WTC11 (cell line): ENCODE measurements at regions of chr4 and their contacts with region 1.

Region 1: DNA sequence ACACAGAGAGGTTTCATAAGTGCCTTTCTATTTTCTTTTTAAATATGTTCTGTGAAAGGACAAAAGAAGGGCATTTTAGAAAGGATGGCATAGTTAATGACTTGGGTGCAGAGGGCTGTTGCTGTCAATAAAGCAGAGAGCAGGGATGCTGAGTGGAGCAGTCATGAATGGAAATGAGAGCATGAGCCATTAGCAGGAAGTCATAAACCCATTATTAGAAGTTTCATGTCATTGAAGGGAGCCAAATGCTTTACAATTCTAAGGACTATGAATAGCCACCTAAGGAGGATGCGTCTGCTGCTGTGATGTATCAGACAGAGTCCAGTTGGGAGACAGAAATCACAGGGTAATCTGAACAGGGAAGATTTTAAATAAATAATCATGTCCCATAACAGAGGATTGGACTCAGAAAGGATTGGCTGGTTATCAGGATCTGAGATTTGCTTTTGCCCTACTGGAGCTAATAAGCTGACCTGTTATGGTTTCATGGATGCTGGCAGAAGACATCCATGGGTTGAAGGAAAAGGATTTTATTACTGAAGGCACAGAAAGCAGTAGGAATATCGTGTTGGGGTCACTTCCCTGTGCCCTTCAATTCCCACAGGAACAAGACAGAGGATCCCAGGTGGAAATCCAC is 47.5 kb upstream of the WDR19 start:
- DNase-seq: no peak
- ATAC-seq: no peak
- H3K4me3 Mint-ChIP-seq: no peak overlapping the region
- H3K27ac Mint-ChIP-seq: no peak overlapping the region
- H3K4me1 Mint-ChIP-seq: peaks cover 6% of the 10 kb centered on the region; the same call in 1 of the 2 replicates
- H3K27me3 Mint-ChIP-seq: no peaks in the 10 kb centered on the region
- CTCF ChIP-seq: no peak

Region 2: GRCh38 chr4:38889143-38889542 is 245.7 kb before region 1 on chr4:
- CTCF ChIA-PET with region 1: interaction called, 10 read pairs
- POLR2A ChIA-PET with region 1: no interaction called
- DNase-seq: no peak
- ATAC-seq: no peak
- H3K4me3 Mint-ChIP-seq: no peak overlapping the region
- H3K27ac Mint-ChIP-seq: no peak overlapping the region
- H3K4me1 Mint-ChIP-seq: peaks cover 45% of the 10 kb centered on the region
- H3K27me3 Mint-ChIP-seq: no peaks in the 10 kb centered on the region
- CTCF ChIP-seq: no peak

Region 3: GRCh38 chr4:38902695-38903094 is 232.1 kb before region 1 on chr4:
- CTCF ChIA-PET with region 1: interaction called, 33 read pairs
- POLR2A ChIA-PET with region 1: no interaction called
- DNase-seq: no peak
- ATAC-seq: 0 out of 2 replicates have a peak, but pooled peaks have one; percentile 36
- H3K4me3 Mint-ChIP-seq: no peak overlapping the region
- H3K27ac Mint-ChIP-seq: no peak overlapping the region
- H3K4me1 Mint-ChIP-seq: peaks cover 6% of the 10 kb centered on the region
- H3K27me3 Mint-ChIP-seq: no peaks in the 10 kb centered on the region
- CTCF ChIP-seq: no peak

Region 4: DNA sequence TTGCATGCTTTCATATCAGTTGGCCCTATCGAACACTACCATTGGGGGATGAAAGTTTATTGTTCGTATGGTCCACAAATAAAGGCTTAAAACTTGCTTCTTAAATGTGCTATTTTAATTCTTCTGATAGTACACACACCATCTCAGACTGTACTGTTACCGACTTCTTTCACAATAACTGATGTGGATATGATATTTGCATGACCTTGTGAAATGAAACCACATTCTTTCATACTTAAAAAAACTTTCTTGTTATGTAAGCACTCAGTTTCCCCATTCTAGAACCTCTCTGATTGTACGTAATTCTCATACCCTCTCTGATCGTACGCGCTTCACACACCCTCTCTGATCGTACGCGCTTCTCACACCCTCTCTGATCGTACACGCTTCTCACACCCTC is 35.5 kb after region 1 on chr4:
- CTCF ChIA-PET with region 1: no interaction called
- POLR2A ChIA-PET with region 1: no interaction called
- DNase-seq: no peak
- ATAC-seq: no peak
- H3K4me3 Mint-ChIP-seq: no peak overlapping the region
- H3K27ac Mint-ChIP-seq: no peak overlapping the region
- H3K4me1 Mint-ChIP-seq: peaks cover 13% of the 10 kb centered on the region
- H3K27me3 Mint-ChIP-seq: peaks cover 10% of the 10 kb centered on the region
- CTCF ChIP-seq: no peak

Region 5: DNA sequence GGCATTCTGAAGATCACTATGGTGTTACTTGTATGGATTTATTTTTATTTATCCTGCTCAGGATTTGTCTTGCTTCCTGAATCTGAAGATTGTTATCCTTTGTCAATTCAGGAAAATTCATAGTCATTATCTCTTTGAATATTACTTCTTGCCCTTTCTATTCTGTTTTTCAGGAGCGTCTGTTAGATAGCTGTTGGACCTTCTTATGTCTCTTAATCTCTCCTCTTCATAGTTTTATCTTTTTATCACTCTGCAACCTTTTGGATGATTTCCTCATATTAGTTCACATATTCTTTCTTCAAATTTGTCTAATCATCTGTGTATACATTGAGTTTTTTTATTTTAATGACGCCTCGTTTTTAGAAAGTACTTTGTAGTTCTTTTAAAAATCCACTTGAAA is 67.2 kb after region 1 on chr4:
- CTCF ChIA-PET with region 1: no interaction called
- POLR2A ChIA-PET with region 1: no interaction called
- DNase-seq: no peak
- ATAC-seq: no peak
- H3K4me3 Mint-ChIP-seq: no peak overlapping the region
- H3K27ac Mint-ChIP-seq: no peak overlapping the region
- H3K4me1 Mint-ChIP-seq: no peaks in the 10 kb centered on the region
- H3K27me3 Mint-ChIP-seq: no peaks in the 10 kb centered on the region
- CTCF ChIP-seq: no peak

Region 6: DNA sequence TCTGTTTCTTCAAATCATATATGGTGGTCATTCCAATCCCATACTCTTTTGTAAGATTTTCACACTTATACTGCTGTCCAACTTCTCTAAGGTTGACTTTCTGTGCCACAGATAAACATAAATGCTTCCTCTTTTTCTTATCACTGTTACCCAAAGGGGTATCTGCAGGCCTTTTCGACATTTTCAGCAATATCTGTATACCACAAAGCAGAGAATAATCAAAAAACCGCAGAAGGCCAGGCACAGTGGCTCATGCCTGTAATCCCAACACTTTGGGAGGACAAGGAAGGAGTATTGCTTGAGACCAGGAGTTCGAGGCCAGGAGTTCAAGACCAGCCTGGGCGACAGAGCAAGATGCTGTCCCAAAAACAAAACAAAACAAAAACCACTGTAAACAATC is 234.5 kb after region 1 on chr4:
- CTCF ChIA-PET with region 1: no interaction called
- POLR2A ChIA-PET with region 1: no interaction called
- DNase-seq: no peak
- ATAC-seq: no peak
- H3K4me3 Mint-ChIP-seq: no peak overlapping the region
- H3K27ac Mint-ChIP-seq: no peak overlapping the region
- H3K4me1 Mint-ChIP-seq: peaks cover 8% of the 10 kb centered on the region
- H3K27me3 Mint-ChIP-seq: peaks cover 45% of the 10 kb centered on the region
- CTCF ChIP-seq: no peak